Dorsolateral prefrontal cortex (tissue), 120 donors: ENCODE measurements at regions of chr9 and their contacts with region 1.

Region 1: DNA sequence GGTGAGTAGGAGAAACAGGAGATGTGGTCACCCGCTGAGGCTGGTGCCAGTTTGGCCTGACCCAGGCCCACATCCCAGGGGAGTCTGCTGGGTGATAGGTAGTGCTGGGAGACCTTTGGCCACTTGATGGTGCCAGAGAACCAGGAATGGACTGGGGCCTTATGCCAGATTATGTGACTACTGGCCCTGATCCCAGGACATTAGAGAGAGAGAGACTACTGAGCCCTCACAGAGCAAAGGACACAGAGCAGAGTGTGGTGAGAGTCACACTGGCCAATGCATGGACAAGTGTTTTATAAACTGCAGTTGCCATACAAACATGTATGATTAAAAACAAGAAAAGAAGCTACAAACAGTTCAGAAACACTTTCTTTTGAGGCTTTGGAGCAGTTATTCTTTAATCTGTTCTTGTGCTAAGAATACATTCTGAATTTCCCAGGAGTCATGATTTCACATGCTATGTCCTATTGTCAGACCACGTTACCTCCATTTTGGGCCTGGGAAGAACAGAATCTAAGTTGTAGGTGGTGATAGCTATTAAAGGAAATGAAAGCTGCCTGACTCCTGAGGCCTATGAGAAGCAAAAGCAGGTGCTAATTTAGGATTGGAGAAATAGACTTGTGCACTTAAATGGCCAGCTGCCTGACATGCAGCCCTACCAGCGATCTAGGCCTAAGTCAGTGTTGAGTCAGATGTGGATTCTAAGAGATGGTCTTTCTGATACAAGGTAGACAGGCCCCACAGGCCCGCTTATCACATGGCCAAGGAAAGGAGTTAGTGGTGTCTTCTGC is 32.6 kb upstream of the TMOD1 start:
- DNase-seq: peak; percentile 60 to 91 (median 80)
- H3K4me3 ChIP-seq: peak overlapping the region in 1 of 59 donors; percentile 4
- H3K27ac ChIP-seq: peak overlapping the region; percentile 6 to 93 (median 85)
- H3K27me3 ChIP-seq: no peaks in the 10 kb centered on the region
- CTCF ChIP-seq: peak; percentile 49 to 98 (median 90)

Region 2: GRCh38 chr9:97598461-97599288 is 129.8 kb after region 1 on chr9:
- intact Hi-C with region 1: loop called (anchors 2 to 5 kb)
- DNase-seq: peak; percentile 44 to 88 (median 74)
- H3K4me3 ChIP-seq: no peak overlapping the region
- H3K27ac ChIP-seq: peak overlapping the region in 33 of 59 donors; percentile 3 to 94 (median 40)
- H3K27me3 ChIP-seq: no peaks in the 10 kb centered on the region
- CTCF ChIP-seq: peak; percentile 60 to 92 (median 85)

Region 3: GRCh38 chr9:97615439-97616072 is 146.7 kb after region 1 on chr9:
- intact Hi-C with region 1: loop called (anchors 1 to 5 kb)
- DNase-seq: peak in 4 of 10 donors; percentile 56 to 83 (median 74)
- H3K4me3 ChIP-seq: no peak overlapping the region
- H3K27ac ChIP-seq: peak overlapping the region in 25 of 59 donors; percentile 2 to 58 (median 32)
- H3K27me3 ChIP-seq: no peaks in the 10 kb centered on the region
- CTCF ChIP-seq: peak; percentile 80 to 97 (median 91)

Region 4: DNA sequence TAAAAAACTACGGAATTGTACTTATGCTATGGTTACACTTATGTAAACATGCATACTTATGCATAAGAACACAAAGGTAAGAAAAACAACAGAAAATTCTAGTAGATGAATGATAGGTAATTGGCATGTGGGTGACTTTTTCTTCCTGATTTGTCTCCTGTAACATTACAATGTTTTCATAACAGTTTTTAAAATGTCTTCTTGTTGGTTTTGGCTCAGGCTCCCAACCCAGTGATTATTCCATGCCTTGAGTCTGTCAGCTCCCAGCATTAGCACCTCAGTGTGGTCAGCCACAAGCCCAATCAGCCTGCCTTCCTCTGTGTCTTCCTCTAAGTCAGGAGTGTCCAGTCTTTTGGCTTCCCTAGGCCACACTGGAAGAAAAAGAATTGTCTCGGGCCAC is 376.3 kb after region 1 on chr9:
- intact Hi-C with region 1: no loop called
- DNase-seq: no peak
- H3K4me3 ChIP-seq: no peak overlapping the region
- H3K27ac ChIP-seq: no peak overlapping the region
- H3K27me3 ChIP-seq: peaks cover 0 to 77% (median 42%) of the 10 kb centered on the region in 45 donors
- CTCF ChIP-seq: no peak